ENCODE measurements at regions of chr6 and their contacts with region 1.

Region 1: DNA sequence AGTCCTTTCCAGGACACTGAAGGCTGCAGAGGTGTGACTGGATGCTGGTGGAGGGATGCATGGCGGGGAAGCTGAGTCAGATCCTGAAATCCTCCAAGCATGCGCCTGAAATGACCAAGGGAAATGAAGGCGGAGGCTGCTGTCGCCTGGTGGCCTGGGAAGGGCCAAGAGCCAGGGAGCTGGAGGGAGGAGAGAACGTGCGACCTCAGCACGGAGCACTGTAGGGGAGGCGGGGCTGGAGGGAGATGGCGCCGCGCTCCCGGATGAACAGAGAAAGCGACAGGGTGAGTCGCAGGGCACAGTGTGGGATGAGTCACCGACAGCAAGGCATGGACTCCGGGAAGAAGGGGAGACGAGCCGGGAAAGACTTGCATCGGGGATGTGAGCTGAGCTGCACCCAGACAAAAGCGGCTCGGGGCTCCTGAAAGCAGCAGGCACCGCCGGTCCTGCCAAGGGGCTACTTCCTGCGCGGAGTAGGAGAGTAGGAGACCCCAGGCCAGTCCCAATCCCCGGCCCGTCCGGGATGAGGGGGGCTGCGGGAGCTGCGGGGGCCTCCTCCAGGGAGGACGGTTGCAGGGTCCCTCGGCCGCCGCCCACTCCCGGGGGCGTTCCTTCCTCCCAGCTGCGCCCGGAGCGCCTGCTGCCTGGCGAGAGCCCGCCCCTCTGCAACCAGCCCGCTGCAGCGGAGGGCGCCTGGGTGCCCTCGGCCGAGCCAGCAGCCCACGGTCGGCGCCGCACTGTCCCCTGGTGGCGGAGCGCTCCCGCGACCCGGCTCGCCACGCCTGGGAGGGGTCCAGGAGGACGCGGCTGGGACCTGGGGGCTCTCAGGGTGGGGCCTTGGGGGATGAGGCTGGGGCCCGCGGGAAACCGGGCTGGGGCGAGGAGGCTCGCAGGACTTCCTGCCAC is 11.0 kb upstream of the NQO2 start:
- DNase-seq: peak; percentile 81 to 90 (median 88)
- H3K4me3 ChIP-seq: peak overlapping the region; percentile 51
- H3K27ac ChIP-seq: peak overlapping the region; percentile 62 to 92
- H3K4me1 ChIP-seq: peaks cover 8% of the 10 kb centered on the region
- H3K27me3 ChIP-seq: no peaks in the 10 kb centered on the region
- CTCF ChIP-seq: peak; percentile 90 to 92 (median 90)
- EP300 ChIP-seq: no peak
- POLR2A ChIP-seq: peak; percentile 18

Region 2: DNA sequence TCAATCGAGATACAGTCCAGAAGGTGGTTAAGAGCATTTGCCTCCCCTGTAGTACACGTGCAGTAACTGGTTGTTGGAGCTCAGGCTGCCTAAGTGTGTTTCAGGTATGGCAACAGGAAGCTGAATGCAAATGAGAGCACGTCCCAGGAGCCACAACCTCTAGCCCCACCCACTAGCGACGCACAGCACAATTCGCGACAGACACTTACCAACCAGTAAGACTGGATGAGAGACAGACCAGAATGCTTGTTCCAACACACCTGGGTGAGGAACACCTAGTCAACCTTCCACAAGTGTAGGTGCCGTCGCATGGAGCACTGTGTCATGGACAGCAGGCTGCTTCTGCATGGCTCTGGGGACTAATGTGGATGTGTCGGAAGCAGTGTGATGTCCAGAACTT is 139.8 kb before region 1 on chr6:
- intact Hi-C with region 1: loop called in 1 of 4 experiments (anchors 5 kb)
- DNase-seq: no peak
- H3K4me3 ChIP-seq: no peak overlapping the region
- H3K27ac ChIP-seq: no peak overlapping the region
- H3K4me1 ChIP-seq: peaks cover 3% of the 10 kb centered on the region
- H3K27me3 ChIP-seq: no peaks in the 10 kb centered on the region
- CTCF ChIP-seq: no peak
- EP300 ChIP-seq: no peak
- POLR2A ChIP-seq: no peak

Region 3: DNA sequence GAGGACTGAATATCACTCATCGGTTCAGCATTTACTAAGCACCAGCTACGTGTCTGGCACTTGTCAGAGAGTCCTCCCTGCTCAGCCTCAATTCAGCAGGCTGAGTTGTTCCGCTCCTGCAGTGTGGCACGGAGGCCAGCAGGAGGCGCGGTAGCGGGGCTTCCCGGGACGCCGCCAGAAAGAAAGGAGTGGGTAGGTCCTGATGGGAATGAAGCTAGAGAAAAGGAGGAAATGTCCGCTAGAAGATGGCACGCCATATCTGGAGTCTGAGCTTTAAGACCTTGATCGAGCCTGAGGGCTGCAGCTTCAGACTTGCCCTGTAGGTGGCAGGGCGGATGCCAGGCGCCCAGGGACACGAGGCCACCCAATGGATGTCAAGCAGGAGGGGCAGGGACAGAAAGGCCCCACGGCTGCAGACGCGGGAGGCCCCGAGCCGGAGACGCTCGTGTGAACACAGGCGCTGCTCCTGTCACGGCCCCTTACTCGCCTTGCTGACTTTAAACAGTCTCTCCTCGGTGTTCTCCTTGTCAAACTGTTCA is 36.1 kb before region 1 on chr6:
- intact Hi-C with region 1: loop called in 3 of 4 experiments (anchors 1 to 5 kb)
- DNase-seq: peak; percentile 69 to 86 (median 79)
- H3K4me3 ChIP-seq: no peak overlapping the region
- H3K27ac ChIP-seq: peak overlapping the region in 1 of 2 donors; percentile 32
- H3K4me1 ChIP-seq: peaks cover 1% of the 10 kb centered on the region
- H3K27me3 ChIP-seq: no peaks in the 10 kb centered on the region
- CTCF ChIP-seq: peak; percentile 89 to 96 (median 94)
- EP300 ChIP-seq: no peak
- POLR2A ChIP-seq: no peak

Region 4: DNA sequence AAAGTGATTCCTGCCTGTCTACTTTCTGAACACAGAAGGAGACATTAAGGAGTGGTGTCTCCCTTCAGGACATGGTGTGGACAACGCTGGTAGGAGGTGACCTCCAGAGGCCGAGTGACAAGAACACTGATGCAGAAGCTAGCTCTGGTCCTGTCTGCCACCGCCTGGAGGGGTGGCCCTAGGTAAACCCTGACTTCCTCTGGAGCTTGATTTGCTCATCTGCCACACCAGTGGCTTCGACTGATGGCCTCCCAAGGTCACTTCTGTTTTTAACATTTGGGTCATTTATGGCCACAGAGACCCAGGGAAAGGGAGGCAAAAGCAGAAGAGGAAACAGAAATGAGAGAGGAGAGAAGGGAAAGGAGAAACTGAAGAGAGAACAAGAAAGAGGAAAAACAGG is 517.5 kb after region 1 on chr6:
- intact Hi-C with region 1: no loop called
- DNase-seq: no peak
- H3K4me3 ChIP-seq: no peak overlapping the region
- H3K27ac ChIP-seq: no peak overlapping the region
- H3K4me1 ChIP-seq: no peaks in the 10 kb centered on the region
- H3K27me3 ChIP-seq: no peaks in the 10 kb centered on the region
- CTCF ChIP-seq: no peak
- EP300 ChIP-seq: no peak
- POLR2A ChIP-seq: no peak

Measured in ovary (tissue), 10 donors.